ENCODE measurements at regions of chrX and their contacts with region 1.

Region 1: GRCh38 chrX:45070116-45071007 is 130.3 kb downstream of the DIPK2B start:
- DNase-seq: peak in 7 of 9 donors; percentile 9 to 59 (median 47)
- ATAC-seq: peak; percentile 74
- H3K4me3 ChIP-seq: no peak overlapping the region
- H3K4me3 Mint-ChIP-seq: peak overlapping the region in 7 of 10 donors; percentile 7 to 50 (median 17)
- H3K27ac ChIP-seq: peak overlapping the region; percentile 36
- H3K27ac Mint-ChIP-seq: peak overlapping the region; percentile 61 to 88 (median 74)
- H3K4me1 ChIP-seq: peaks cover 0 to 4% of the 10 kb centered on the region in 2 donors
- H3K4me1 Mint-ChIP-seq: peaks cover 30 to 87% (median 67%) of the 10 kb centered on the region in 7 donors
- H3K27me3 ChIP-seq: no peaks in the 10 kb centered on the region
- H3K27me3 Mint-ChIP-seq: no peaks in the 10 kb centered on the region

Region 2: DNA sequence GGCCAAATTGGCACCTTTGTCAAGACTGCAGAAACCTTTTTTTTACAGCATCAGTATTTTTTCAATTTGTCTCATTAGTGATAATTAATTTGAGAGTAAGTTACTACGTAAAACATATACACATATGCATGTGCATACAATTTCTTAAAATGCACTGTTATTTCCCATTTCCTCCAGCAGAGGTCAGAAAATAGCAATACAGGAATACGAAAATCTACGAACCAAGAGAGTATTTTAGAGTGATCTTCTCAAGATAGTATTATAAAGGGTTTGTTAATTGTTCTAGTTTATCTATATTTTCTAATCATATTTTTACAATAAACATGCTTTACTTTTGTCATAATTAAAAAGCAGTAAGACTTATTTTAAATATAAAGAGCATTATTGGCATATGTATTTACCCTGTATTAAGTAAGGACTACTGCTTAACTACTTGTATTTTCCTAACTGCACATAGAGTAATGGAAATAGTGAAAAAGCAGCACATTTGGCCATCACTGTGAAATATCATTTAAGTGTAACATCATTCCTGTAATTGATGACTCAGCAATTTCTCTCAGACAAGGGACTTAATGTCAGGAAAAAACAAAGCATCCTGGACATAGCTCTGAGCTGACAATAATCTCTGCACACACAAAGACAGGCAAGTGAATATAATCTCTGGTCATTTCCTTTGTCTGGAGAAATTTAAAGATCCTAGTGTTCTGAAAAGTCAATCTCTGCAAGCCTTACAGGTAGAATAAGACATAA is 1233.8 kb before region 1 on chrX:
- CTCF ChIA-PET with region 1: no interaction called
- POLR2A ChIA-PET with region 1: no interaction called
- intact Hi-C with region 1: loop called in 1 of 2 experiments (anchors 2 kb)
- DNase-seq: peak in 5 of 9 donors; percentile 8 to 39 (median 20)
- ATAC-seq: no peak
- H3K4me3 ChIP-seq: no peak overlapping the region
- H3K4me3 Mint-ChIP-seq: no peak overlapping the region
- H3K27ac ChIP-seq: no peak overlapping the region
- H3K27ac Mint-ChIP-seq: no peak overlapping the region
- H3K4me1 ChIP-seq: no peaks in the 10 kb centered on the region
- H3K4me1 Mint-ChIP-seq: no peaks in the 10 kb centered on the region
- H3K27me3 ChIP-seq: no peaks in the 10 kb centered on the region
- H3K27me3 Mint-ChIP-seq: peaks cover 0 to 6% (median 0%) of the 10 kb centered on the region in 5 donors

Region 3: GRCh38 chrX:44183329-44183728 is 887.0 kb before region 1 on chrX:
- CTCF ChIA-PET with region 1: no interaction called
- POLR2A ChIA-PET with region 1: no interaction called
- intact Hi-C with region 1: loop called in 1 of 2 experiments (anchors 10 kb)
- DNase-seq: peak in 2 of 9 donors; percentile 2 to 3
- ATAC-seq: no peak
- H3K4me3 ChIP-seq: no peak overlapping the region
- H3K4me3 Mint-ChIP-seq: peak overlapping the region in 1 of 10 donors; percentile 1
- H3K27ac ChIP-seq: no peak overlapping the region
- H3K27ac Mint-ChIP-seq: no peak overlapping the region
- H3K4me1 ChIP-seq: no peaks in the 10 kb centered on the region
- H3K4me1 Mint-ChIP-seq: peaks cover 0 to 6% (median 0%) of the 10 kb centered on the region in 7 donors
- H3K27me3 ChIP-seq: no peaks in the 10 kb centered on the region
- H3K27me3 Mint-ChIP-seq: no peaks in the 10 kb centered on the region

Region 4: DNA sequence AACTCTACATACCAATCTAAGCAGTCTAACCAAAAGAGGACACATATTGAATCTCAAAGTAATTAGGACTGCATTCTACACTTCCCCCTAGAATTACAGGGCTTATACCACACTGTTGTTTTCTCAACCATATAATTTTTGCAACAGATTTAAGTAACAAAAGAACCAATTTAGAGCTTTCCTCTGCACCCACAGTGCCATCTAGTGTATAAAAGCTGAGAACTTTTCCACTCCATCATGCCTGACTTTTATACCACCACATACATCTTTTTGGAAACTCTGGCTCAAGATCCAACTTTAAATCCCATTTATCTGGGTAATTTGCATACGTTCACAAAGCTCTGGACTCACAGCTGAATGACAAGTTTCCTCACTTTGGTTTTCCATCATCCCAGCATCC is 826.4 kb before region 1 on chrX:
- CTCF ChIA-PET with region 1: no interaction called
- POLR2A ChIA-PET with region 1: no interaction called
- intact Hi-C with region 1: loop called in 1 of 2 experiments (anchors 2 kb)
- DNase-seq: peak in 6 of 9 donors; percentile 8 to 51 (median 40)
- ATAC-seq: peak; percentile 46
- H3K4me3 ChIP-seq: no peak overlapping the region
- H3K4me3 Mint-ChIP-seq: peak overlapping the region in 2 of 10 donors; percentile 0 to 6
- H3K27ac ChIP-seq: no peak overlapping the region
- H3K27ac Mint-ChIP-seq: peak overlapping the region in 8 of 9 donors; percentile 5 to 79 (median 52)
- H3K4me1 ChIP-seq: peaks cover 5 to 22% of the 10 kb centered on the region in 2 donors
- H3K4me1 Mint-ChIP-seq: peaks cover 10 to 46% (median 30%) of the 10 kb centered on the region in 7 donors
- H3K27me3 ChIP-seq: no peaks in the 10 kb centered on the region
- H3K27me3 Mint-ChIP-seq: no peaks in the 10 kb centered on the region

Region 5: DNA sequence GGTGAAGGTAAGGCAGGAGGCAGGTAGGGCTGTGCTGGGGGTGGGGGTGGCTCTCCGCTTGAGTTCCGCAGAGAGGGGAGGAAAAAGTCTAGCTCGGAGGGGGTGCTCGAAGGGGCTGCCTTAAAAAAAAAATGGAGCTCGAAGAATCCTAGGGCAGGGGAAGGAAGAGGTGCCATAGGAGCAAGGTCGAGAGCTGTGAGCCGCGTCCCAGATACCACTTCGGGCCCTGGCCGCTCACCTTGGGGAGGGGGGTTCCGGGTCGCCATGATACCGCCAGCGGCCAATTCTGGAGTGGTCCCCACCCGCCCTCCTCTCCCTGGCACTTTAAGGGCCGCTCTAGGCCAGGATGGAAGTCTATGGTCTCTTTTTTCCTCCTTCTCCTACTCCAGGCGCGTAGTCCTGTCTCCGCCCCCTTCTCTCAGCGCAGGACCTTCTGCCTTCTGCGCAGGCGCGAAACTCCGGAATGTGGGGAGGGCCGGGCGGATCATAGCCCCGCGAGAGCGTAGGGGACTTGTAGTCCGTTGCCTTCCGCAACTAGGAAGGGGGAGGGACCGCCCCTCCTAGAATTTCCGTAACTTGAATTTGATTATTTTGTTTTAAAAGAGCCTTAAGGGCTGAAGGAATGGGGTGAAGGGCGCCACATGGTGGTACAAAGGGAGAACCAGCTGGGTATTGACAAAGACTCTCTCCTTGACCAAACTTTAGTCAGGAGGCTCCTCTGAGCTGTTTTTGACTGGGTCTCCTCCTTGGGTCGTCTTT is 527.6 kb before region 1 on chrX and contains the start of gene FUNDC1:
- CTCF ChIA-PET with region 1: no interaction called
- POLR2A ChIA-PET with region 1: no interaction called
- intact Hi-C with region 1: loop called (anchors 2 to 5 kb)
- DNase-seq: peak; percentile 75 to 93 (median 89)
- ATAC-seq: peak; percentile 98
- H3K4me3 ChIP-seq: peak within 1 kb of the TSS; percentile 79
- H3K4me3 Mint-ChIP-seq: peak within 1 kb of the TSS; percentile 89 to 97 (median 93)
- H3K27ac ChIP-seq: peak within 1 kb of the TSS; percentile 92
- H3K27ac Mint-ChIP-seq: peak within 1 kb of the TSS; percentile 86 to 97 (median 93)
- H3K4me1 ChIP-seq: peaks cover 5 to 12% of the 10 kb centered on the region in 2 donors
- H3K4me1 Mint-ChIP-seq: peaks cover 12 to 54% (median 37%) of the 10 kb centered on the region in 7 donors
- H3K27me3 ChIP-seq: no peaks in the 10 kb centered on the region
- H3K27me3 Mint-ChIP-seq: no peaks in the 10 kb centered on the region
- total RNA-seq, gene FUNDC1: 5.2 to 10.1 (median 9.8) TPM

Region 6: DNA sequence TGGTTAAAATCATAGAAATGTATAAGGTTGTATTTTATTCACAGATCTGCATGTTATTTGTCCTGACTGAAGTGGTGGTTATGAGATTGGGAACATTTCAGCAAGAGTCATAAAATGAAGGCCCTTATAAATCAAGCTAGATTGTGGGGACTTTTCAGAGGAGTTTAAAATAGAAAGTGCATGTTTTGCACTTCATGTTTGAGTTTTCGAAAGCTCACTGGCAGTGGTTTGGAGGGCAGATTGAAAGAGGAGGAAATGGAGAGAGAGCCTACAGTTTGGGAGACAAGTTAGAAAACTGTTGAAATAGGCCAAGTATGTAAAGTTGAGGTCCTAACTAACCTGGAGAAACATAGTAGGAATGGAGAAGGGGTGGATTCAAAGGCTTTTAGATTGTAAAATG is 72.5 kb before region 1 on chrX:
- CTCF ChIA-PET with region 1: no interaction called
- POLR2A ChIA-PET with region 1: no interaction called
- intact Hi-C with region 1: loop called in 1 of 2 experiments (anchors 5 kb)
- DNase-seq: no peak
- ATAC-seq: no peak
- H3K4me3 ChIP-seq: no peak overlapping the region
- H3K4me3 Mint-ChIP-seq: peak overlapping the region in 8 of 10 donors; percentile 11 to 69 (median 45)
- H3K27ac ChIP-seq: no peak overlapping the region
- H3K27ac Mint-ChIP-seq: peak overlapping the region; percentile 18 to 93 (median 70)
- H3K4me1 ChIP-seq: peaks cover 4 to 18% of the 10 kb centered on the region in 2 donors
- H3K4me1 Mint-ChIP-seq: peaks cover 31 to 94% (median 68%) of the 10 kb centered on the region in 7 donors
- H3K27me3 ChIP-seq: no peaks in the 10 kb centered on the region
- H3K27me3 Mint-ChIP-seq: no peaks in the 10 kb centered on the region

Region 7: GRCh38 chrX:45660477-45660876 is 590.1 kb after region 1 on chrX:
- CTCF ChIA-PET with region 1: no interaction called
- POLR2A ChIA-PET with region 1: no interaction called
- intact Hi-C with region 1: no loop called
- DNase-seq: no peak
- ATAC-seq: no peak
- H3K4me3 ChIP-seq: no peak overlapping the region
- H3K4me3 Mint-ChIP-seq: no peak overlapping the region
- H3K27ac ChIP-seq: no peak overlapping the region
- H3K27ac Mint-ChIP-seq: no peak overlapping the region
- H3K4me1 ChIP-seq: no peaks in the 10 kb centered on the region
- H3K4me1 Mint-ChIP-seq: no peaks in the 10 kb centered on the region
- H3K27me3 ChIP-seq: no peaks in the 10 kb centered on the region
- H3K27me3 Mint-ChIP-seq: no peaks in the 10 kb centered on the region

Measured in naive thymus-derived CD4-positive, alpha-beta T cell (primary cell).